Prostate gland (tissue), 2 donors: ENCODE measurements at regions of chr4 and their contacts with region 1.

Region 1: GRCh38 chr4:2418650-2419571 is at the start of gene CFAP99:
- DNase-seq: peak; percentile 97
- H3K4me3 ChIP-seq: peak within 1 kb of the TSS; percentile 56 to 60
- H3K27ac ChIP-seq: no peak within 1 kb of the TSS
- H3K4me1 ChIP-seq: peaks cover 4% of the 10 kb centered on the region
- H3K27me3 ChIP-seq: no peaks in the 10 kb centered on the region
- CTCF ChIP-seq: peak in 2 of 4 experiments; percentile 38 to 51
- POLR2A ChIP-seq: no peak
- total RNA-seq, gene CFAP99: 0.18 to 7.4 TPM

Region 2: GRCh38 chr4:2262143-2262943 is 156.6 kb before region 1 on chr4:
- intact Hi-C with region 1: loop called (anchors 10 kb)
- DNase-seq: peak; percentile 100
- H3K4me3 ChIP-seq: peak overlapping the region; percentile 61 to 88
- H3K27ac ChIP-seq: peak overlapping the region; percentile 91 to 93
- H3K4me1 ChIP-seq: peaks cover 33% of the 10 kb centered on the region
- H3K27me3 ChIP-seq: no peaks in the 10 kb centered on the region
- CTCF ChIP-seq: peak in 2 of 4 experiments; percentile 23 to 45
- POLR2A ChIP-seq: peak; percentile 87

Region 3: GRCh38 chr4:2468445-2469192 is 49.7 kb after region 1 on chr4 and contains the start of gene RNF4:
- intact Hi-C with region 1: loop called (anchors 5 kb)
- DNase-seq: peak; percentile 96
- H3K4me3 ChIP-seq: peak within 1 kb of the TSS; percentile 91 to 92
- H3K27ac ChIP-seq: peak within 1 kb of the TSS; percentile 87 to 93
- H3K4me1 ChIP-seq: no peaks in the 10 kb centered on the region
- H3K27me3 ChIP-seq: no peaks in the 10 kb centered on the region
- CTCF ChIP-seq: peak in 2 of 4 experiments; percentile 3 to 16
- POLR2A ChIP-seq: peak; percentile 64
- total RNA-seq, gene RNF4: 33.9 to 56.1 TPM

Region 4: GRCh38 chr4:2963175-2963965 is 544.5 kb after region 1 on chr4 and contains the starts of genes GRK4 and NOP14:
- intact Hi-C with region 1: loop called (anchors 5 kb)
- DNase-seq: peak; percentile 98
- H3K4me3 ChIP-seq: peak within 1 kb of the TSS; percentile 97
- H3K27ac ChIP-seq: peak within 1 kb of the TSS; percentile 71 to 72
- H3K4me1 ChIP-seq: no peaks in the 10 kb centered on the region
- H3K27me3 ChIP-seq: no peaks in the 10 kb centered on the region
- CTCF ChIP-seq: peak in 3 of 4 experiments; percentile 43 to 64 (median 45)
- POLR2A ChIP-seq: peak; percentile 36
- total RNA-seq, gene GRK4: 3.4 to 18.9 TPM
- total RNA-seq, gene NOP14: 16.0 to 17.8 TPM